Activated T-helper 2 cell treated with anti-CD3 and anti-CD28 coated beads, Interferon-gamma antibody, Interleukin-2, Interleukin-4, amounts not matched to agents 10 μg/mL and 5 μg/mL and 100 μg/mL, durations not matched to agents 14 hours and 24 hours and 36 hours (primary cell): ENCODE measurements at regions of chr1 and their contacts with region 1.

Region 1: GRCh38 chr1:103106426-103107341 is 1.6 kb downstream of the COL11A1 start:
- DNase-seq: no peak
- H3K4me3 Mint-ChIP-seq: no peak overlapping the region
- H3K27ac Mint-ChIP-seq: no peak overlapping the region
- H3K4me1 Mint-ChIP-seq: peaks cover 2% of the 10 kb centered on the region
- H3K27me3 Mint-ChIP-seq: peaks cover 26% of the 10 kb centered on the region

Region 2: DNA sequence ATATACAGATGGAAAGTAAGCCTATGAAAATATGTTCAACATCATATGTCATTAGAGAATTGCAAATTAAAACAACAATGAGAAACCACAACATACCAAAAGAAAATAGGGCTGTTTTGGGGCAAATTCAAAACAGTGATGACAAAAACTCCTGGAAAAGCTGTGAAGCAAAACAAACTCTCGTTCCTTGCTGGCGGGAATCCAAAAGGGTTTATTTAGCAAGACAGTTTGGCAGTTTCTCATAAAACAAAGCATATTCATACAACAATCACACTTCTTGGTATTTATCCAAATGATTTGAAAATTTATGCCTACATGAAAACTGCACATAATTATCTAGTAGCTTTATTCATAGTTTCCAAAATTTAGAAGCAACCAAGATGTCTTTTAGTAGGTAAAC is 42.8 kb before region 1 on chr1:
- intact Hi-C with region 1: no loop called
- DNase-seq: no peak
- H3K4me3 Mint-ChIP-seq: no peak overlapping the region
- H3K27ac Mint-ChIP-seq: no peak overlapping the region
- H3K4me1 Mint-ChIP-seq: no peaks in the 10 kb centered on the region
- H3K27me3 Mint-ChIP-seq: no peaks in the 10 kb centered on the region

Region 3: GRCh38 chr1:103084181-103084580 is 22.5 kb before region 1 on chr1:
- intact Hi-C with region 1: no loop called
- DNase-seq: no peak
- H3K4me3 Mint-ChIP-seq: no peak overlapping the region
- H3K27ac Mint-ChIP-seq: no peak overlapping the region
- H3K4me1 Mint-ChIP-seq: no peaks in the 10 kb centered on the region
- H3K27me3 Mint-ChIP-seq: no peaks in the 10 kb centered on the region

Region 4: DNA sequence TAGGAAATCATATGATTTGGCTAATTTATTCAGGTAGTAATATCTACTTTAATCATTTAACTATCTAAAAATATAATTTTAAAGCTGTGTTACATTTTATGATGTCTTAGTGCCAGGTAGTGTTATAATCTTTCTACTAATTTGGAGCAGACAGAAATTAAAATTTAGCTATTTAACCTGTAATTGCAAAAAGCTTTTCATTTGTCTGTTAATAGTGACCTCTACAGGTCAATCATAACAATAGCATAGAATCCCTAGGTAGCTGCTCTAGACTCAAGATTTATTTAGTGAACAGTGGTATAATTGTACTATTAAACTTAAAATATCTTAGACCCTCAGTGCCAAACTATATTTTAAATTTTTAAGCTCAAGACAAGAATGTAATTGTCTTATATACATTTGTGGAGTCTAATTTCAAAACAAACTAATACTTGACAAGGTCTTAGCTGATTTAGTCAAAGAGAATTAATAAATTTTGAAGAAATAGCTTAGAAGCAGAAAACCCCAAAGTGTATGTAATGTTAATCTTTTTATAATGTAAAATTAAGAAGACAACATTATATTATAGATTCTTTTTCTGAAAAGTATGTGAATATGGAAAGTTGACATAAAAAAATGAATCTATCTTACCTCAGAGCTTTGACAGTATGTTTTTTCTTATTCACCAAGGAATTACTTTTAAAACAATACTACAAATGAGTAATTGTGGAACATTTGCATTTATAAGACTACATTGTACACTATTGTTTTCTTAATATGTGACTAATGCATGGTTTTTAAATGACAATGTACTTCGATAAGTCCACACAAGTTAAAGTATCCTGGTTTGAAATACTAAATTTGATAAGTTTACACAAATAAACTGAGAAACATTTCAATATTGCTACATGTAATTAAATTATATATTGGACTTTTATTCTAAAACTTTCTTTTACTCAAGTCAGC is 354.7 kb after region 1 on chr1:
- intact Hi-C with region 1: loop called (anchors 1 kb)
- DNase-seq: no peak
- H3K4me3 Mint-ChIP-seq: no peak overlapping the region
- H3K27ac Mint-ChIP-seq: no peak overlapping the region
- H3K4me1 Mint-ChIP-seq: no peaks in the 10 kb centered on the region
- H3K27me3 Mint-ChIP-seq: no peaks in the 10 kb centered on the region

Region 5: DNA sequence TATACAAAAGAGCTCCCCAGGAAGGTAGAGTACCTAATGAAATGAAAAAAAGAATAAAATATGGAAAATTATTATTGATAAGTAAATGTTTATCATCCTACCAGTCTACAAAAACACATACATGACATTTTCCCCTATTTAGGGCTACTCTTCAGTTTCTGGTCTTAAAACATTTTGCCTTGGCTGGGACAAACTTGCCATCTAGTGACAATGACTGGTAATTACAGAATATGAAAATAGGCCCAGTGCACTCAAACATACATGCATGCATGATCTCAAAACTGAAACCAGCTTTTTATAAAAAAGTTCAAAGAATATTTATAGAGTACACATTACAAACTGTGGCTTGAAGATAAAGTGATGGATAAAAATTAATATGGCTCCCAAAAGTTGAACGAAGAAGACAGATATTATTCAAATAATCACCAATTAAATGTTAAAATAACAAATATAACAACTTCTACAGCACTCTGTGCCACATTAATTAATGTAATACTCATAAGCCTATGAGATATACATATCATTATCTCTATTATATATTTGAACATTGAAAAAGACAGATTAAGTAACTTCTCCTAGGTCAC is 408.3 kb after region 1 on chr1:
- intact Hi-C with region 1: loop called (anchors 1 kb)
- DNase-seq: no peak
- H3K4me3 Mint-ChIP-seq: no peak overlapping the region
- H3K27ac Mint-ChIP-seq: no peak overlapping the region
- H3K4me1 Mint-ChIP-seq: peaks cover 22% of the 10 kb centered on the region
- H3K27me3 Mint-ChIP-seq: no peaks in the 10 kb centered on the region